GM12878 (cell line): ENCODE measurements at regions of chr5 and their contacts with region 1.

Region 1: GRCh38 chr5:87195104-87195591 is 72.5 kb upstream of the RASA1 start:
- DNase-seq: peak; percentile 48
- ATAC-seq: peak; percentile 73
- H3K4me3 ChIP-seq: no peak overlapping the region
- H3K27ac ChIP-seq: peak overlapping the region; percentile 63
- H3K4me1 ChIP-seq: peaks cover 35% of the 10 kb centered on the region
- H3K27me3 ChIP-seq: no peaks in the 10 kb centered on the region
- CTCF ChIP-seq: no peak
- EP300 ChIP-seq: 0 out of 4 replicates have a peak, but pooled peaks of 1 of the 2 experiments have one; percentile 46
- POLR2A ChIP-seq: no peak
- RAD21 ChIP-seq: peak; percentile 14; the same call in 1 of the 2 replicates

Region 2: GRCh38 chr5:87182649-87183048 is 12.5 kb before region 1 on chr5:
- CTCF ChIA-PET with region 1: interaction called, 5 read pairs
- POLR2A ChIA-PET with region 1: interaction called, 5 read pairs
- RAD21 ChIA-PET with region 1: interaction called, 9 read pairs
- SMC1A ChIA-PET with region 1: interaction called, 16 read pairs
- in situ Hi-C with region 1: no loop called
- intact Hi-C with region 1: no loop called
- DNase-seq: no peak
- ATAC-seq: no peak; the same call in 2 of the 3 replicates
- H3K4me3 ChIP-seq: no peak overlapping the region
- H3K27ac ChIP-seq: no peak overlapping the region
- H3K4me1 ChIP-seq: no peaks in the 10 kb centered on the region
- H3K27me3 ChIP-seq: no peaks in the 10 kb centered on the region
- CTCF ChIP-seq: no peak
- EP300 ChIP-seq: no peak
- POLR2A ChIP-seq: no peak
- RAD21 ChIP-seq: no peak

Region 3: DNA sequence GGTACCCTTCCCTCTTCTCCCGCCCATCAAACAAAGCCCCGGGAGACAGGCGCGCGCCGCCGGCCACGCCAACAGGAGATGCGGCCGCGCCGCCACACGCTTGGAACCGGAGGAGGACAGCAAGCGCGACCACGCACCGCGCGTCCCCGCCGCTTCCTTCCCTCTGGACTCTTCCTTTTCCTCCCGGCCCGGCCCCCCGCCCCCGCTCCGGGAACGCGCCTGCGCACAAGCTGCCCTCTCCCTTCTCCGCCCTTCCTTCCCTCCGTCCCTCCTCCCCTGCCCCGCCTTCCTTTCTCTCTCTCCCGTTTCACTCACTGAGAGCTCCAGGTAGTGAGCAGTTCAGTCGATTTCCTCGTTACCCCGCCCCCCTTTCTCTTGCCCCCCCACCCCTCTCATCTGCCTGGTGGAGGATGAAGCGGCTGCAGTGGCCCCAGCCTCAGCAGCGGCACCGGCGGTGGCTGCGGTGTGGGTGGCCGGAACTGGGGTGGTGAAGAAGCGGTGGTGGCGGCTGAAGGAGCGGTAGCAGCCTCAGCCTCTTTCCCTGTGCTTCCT is 72.5 kb after region 1 on chr5 and contains the start of gene RASA1:
- CTCF ChIA-PET with region 1: no interaction called
- POLR2A ChIA-PET with region 1: interaction called, 8 read pairs
- RAD21 ChIA-PET with region 1: interaction called, 10 read pairs
- SMC1A ChIA-PET with region 1: interaction called, 4 read pairs
- in situ Hi-C with region 1: no loop called
- intact Hi-C with region 1: loop called (anchors 5 kb)
- DNase-seq: peak; percentile 76
- ATAC-seq: peak; percentile 74
- H3K4me3 ChIP-seq: peak within 1 kb of the TSS; percentile 98
- H3K27ac ChIP-seq: peak within 1 kb of the TSS; percentile 94
- H3K4me1 ChIP-seq: no peaks in the 10 kb centered on the region
- H3K27me3 ChIP-seq: no peaks in the 10 kb centered on the region
- CTCF ChIP-seq: no peak
- EP300 ChIP-seq: no peak
- POLR2A ChIP-seq: peak; percentile 91
- RAD21 ChIP-seq: peak; percentile 30
- polyA plus RNA-seq, gene RASA1: 7.8 to 12.0 TPM